SK-N-SH (cell line): ENCODE measurements at regions of chr9 and their contacts with region 1.

Region 1: GRCh38 chr9:22452415-22453010 is 5.9 kb downstream of the DMRTA1 start:
- DNase-seq: no peak
- H3K4me3 ChIP-seq: no peak overlapping the region; a peak in 1 of 4 replicates
- H3K27ac ChIP-seq: no peak overlapping the region
- H3K4me1 ChIP-seq: no peaks in the 10 kb centered on the region
- H3K27me3 ChIP-seq: peaks cover 31% of the 10 kb centered on the region
- CTCF ChIP-seq: peak; percentile 86
- EP300 ChIP-seq: no peak
- RAD21 ChIP-seq: peak; percentile 58

Region 2: GRCh38 chr9:22307013-22307711 is 145.4 kb before region 1 on chr9:
- CTCF ChIA-PET with region 1: interaction called, 11 read pairs
- POLR2A ChIA-PET with region 1: no interaction called
- DNase-seq: no peak
- H3K4me3 ChIP-seq: peak overlapping the region in 1 of 2 experiments; percentile 37; a peak in 1 of 4 replicates
- H3K27ac ChIP-seq: no peak overlapping the region
- H3K4me1 ChIP-seq: no peaks in the 10 kb centered on the region
- H3K27me3 ChIP-seq: no peaks in the 10 kb centered on the region
- CTCF ChIP-seq: peak; percentile 64
- EP300 ChIP-seq: no peak
- RAD21 ChIP-seq: peak; percentile 62

Region 3: GRCh38 chr9:22469928-22470544 is 17.5 kb after region 1 on chr9:
- CTCF ChIA-PET with region 1: interaction called, 19 read pairs
- POLR2A ChIA-PET with region 1: no interaction called
- DNase-seq: peak; percentile 11
- H3K4me3 ChIP-seq: no peak overlapping the region; a peak in 1 of 4 replicates
- H3K27ac ChIP-seq: no peak overlapping the region
- H3K4me1 ChIP-seq: no peaks in the 10 kb centered on the region
- H3K27me3 ChIP-seq: peaks cover 13% of the 10 kb centered on the region; the same call in 1 of the 2 replicates
- CTCF ChIP-seq: peak; percentile 83
- EP300 ChIP-seq: no peak
- RAD21 ChIP-seq: peak; percentile 70

Region 4: DNA sequence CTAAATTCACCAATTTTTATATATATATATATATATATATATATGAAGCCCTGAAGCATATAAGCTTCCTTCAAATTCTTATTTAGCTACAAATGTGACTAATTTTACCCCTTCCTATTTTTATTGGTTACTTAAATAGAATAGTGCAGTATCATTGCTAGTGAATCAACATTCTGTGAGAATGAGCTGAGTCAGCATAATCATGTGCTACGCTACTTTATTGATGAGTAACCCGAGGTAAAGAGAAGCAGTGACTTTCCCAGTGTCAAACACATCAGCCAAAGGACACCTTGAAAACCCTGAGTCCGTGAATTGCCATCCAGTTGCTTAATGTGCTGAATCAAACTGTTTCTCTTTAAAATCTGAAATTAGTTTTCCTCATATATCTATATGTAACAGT is 540.3 kb after region 1 on chr9:
- CTCF ChIA-PET with region 1: no interaction called
- POLR2A ChIA-PET with region 1: no interaction called
- DNase-seq: no peak
- H3K4me3 ChIP-seq: no peak overlapping the region
- H3K27ac ChIP-seq: no peak overlapping the region
- H3K4me1 ChIP-seq: no peaks in the 10 kb centered on the region
- H3K27me3 ChIP-seq: no peaks in the 10 kb centered on the region
- CTCF ChIP-seq: no peak
- EP300 ChIP-seq: no peak
- RAD21 ChIP-seq: no peak